Caco-2 (cell line): ENCODE measurements at regions of chr7 and their contacts with region 1.

Region 1: GRCh38 chr7:111871283-111871682 is 309.0 kb upstream of the IMMP2L start:
- DNase-seq: no peak
- H3K4me3 ChIP-seq: no peak overlapping the region
- H3K4me3 Mint-ChIP-seq: no peak overlapping the region
- H3K27ac Mint-ChIP-seq: no peak overlapping the region
- H3K4me1 ChIP-seq: no peaks in the 10 kb centered on the region
- H3K4me1 Mint-ChIP-seq: peaks cover 7% of the 10 kb centered on the region
- H3K27me3 ChIP-seq: no peaks in the 10 kb centered on the region
- H3K27me3 Mint-ChIP-seq: no peaks in the 10 kb centered on the region
- CTCF ChIP-seq: no peak

Region 2: DNA sequence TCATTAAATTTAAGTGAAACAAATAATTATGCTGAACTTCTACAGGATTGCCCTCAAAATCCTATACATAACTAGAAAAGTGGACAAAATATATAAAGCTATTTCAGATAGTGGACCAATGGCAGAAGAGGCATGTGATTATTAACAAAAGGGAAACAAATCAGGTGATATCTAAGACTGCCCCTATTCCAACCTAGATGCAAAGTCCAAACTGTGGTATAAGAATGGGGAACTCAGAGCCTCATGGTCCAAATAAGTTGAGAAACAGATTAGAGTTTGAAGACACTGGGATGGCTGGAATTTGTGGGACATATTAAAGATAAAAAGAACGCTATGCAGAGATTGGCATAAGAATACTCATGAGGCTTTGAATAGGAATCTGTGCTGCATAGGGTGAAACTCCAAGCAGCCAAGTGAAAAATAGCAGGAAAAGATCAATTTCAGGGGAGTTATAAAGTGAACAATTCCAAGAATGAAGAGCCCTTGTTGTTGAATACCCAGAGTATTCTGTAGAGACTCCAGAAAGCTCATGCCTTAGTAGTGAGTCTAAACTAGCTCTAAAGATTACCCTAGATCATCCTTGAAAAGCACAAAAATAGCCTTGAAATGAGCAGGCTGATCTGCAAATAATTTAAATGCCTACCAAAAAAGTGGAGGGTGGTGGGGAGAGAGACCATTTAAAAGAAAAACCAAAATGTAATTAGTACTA is 461.4 kb before region 1 on chr7:
- CTCF ChIA-PET with region 1: no interaction called
- POLR2A ChIA-PET with region 1: no interaction called
- intact Hi-C with region 1: no loop called
- DNase-seq: no peak
- H3K4me3 ChIP-seq: no peak overlapping the region
- H3K4me3 Mint-ChIP-seq: no peak overlapping the region
- H3K27ac Mint-ChIP-seq: no peak overlapping the region
- H3K4me1 ChIP-seq: no peaks in the 10 kb centered on the region
- H3K4me1 Mint-ChIP-seq: peaks cover 9% of the 10 kb centered on the region
- H3K27me3 ChIP-seq: no peaks in the 10 kb centered on the region
- H3K27me3 Mint-ChIP-seq: no peaks in the 10 kb centered on the region
- CTCF ChIP-seq: no peak

Region 3: GRCh38 chr7:111900283-111900682 is 29.0 kb after region 1 on chr7:
- CTCF ChIA-PET with region 1: no interaction called
- POLR2A ChIA-PET with region 1: no interaction called
- intact Hi-C with region 1: loop called (anchors 2 kb)
- DNase-seq: no peak
- H3K4me3 ChIP-seq: no peak overlapping the region
- H3K4me3 Mint-ChIP-seq: no peak overlapping the region
- H3K27ac Mint-ChIP-seq: no peak overlapping the region
- H3K4me1 ChIP-seq: no peaks in the 10 kb centered on the region
- H3K4me1 Mint-ChIP-seq: no peaks in the 10 kb centered on the region
- H3K27me3 ChIP-seq: no peaks in the 10 kb centered on the region
- H3K27me3 Mint-ChIP-seq: peaks cover 7% of the 10 kb centered on the region
- CTCF ChIP-seq: no peak